Spleen (tissue), 13 donors: ENCODE measurements at regions of chr19 and their contacts with region 1.

Region 1: GRCh38 chr19:41945135-41945766 is 13.9 kb downstream of the RABAC1 start:
- DNase-seq: peak; percentile 93
- H3K4me3 ChIP-seq: peak overlapping the region in 1 of 8 donors; percentile 24
- H3K27ac ChIP-seq: peak overlapping the region; percentile 60 to 88 (median 76)
- H3K4me1 ChIP-seq: peaks cover 14 to 62% (median 43%) of the 10 kb centered on the region in 6 donors
- H3K27me3 ChIP-seq: peaks cover 0 to 15% (median 11%) of the 10 kb centered on the region in 7 donors
- CTCF ChIP-seq: no peak
- POLR2A ChIP-seq: no peak

Region 2: DNA sequence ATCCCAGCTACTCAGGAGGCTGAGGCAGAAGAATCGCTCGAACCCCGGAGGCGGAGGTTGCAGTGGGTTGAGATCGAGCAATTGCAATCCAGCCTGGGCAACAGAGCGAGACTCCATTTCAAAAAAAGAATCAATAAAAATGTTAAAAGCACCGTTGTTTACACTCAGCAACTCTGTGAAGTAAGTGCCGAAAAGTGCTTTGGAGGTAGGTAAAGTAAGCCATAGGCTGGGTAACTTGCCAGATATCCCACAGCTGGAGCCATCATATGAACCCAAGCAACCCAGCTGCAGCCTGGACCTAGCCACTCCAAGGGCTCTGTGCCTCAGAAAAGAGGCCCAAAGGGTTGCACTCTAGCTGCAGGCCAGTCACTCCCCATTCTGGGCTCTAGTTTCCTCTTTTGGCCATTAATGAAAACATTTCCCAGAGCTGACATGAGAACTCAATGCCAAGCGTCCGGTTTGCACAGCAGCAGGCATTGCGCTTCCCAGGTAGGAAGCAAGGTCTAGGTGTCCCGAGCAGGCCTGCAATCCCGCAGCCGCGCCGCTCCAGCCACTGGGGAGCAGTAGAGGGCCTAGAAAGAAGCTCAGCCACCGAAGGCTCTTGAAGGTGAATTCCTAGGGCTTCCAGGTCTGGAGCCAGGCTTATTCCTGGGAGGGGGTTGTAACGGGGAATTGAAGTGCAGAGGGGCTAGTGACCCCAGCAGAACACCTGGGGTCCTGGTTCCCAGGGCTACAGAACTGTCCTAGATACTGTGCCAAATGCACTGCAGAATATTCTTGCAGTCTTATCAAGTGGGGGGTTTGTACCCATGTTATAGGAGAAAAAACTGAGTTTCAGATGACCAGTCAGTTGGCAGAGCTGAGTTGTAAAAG is 72.2 kb before region 1 on chr19:
- intact Hi-C with region 1: loop called (anchors 5 kb)
- DNase-seq: peak; percentile 94
- H3K4me3 ChIP-seq: peak overlapping the region in 1 of 8 donors; percentile 47
- H3K27ac ChIP-seq: peak overlapping the region; percentile 61 to 99 (median 82)
- H3K4me1 ChIP-seq: peaks cover 58 to 100% (median 98%) of the 10 kb centered on the region in 6 donors
- H3K27me3 ChIP-seq: no peaks in the 10 kb centered on the region
- CTCF ChIP-seq: peak; percentile 58 to 86 (median 74)
- POLR2A ChIP-seq: no peak

Region 3: DNA sequence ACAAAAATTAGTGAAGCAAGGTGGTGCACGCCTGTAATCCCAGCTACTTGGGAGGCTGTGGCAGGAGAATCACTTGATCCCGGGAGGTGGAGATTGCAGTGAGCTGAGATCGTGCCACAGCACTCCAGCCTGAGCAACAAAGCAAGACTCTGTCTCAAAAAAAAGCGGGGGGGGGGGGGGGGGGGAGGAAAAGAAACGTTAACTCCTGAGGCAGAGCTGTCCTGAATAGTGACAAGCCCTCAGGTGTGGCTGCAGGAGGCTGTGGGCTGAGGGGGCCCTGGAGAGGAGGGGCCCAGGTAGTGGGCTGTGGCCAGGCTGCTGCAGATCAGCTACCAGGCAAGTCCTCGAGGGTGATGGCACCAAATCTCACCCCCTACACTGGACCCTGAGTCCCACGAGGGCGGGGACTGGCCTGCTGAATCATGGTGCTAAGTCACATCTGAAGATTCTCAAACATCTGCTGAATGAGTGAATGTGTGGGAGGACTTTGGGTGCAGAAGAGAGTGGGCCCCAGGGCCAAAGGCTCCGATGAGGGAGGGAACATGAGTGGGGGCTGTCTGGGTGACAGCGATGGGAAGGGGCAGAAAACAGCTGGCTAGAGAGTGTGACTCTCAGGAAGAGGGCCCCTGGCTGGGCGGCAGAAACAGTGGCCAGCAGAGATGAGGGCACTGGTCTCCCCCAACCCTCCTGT is 73.4 kb after region 1 on chr19:
- intact Hi-C with region 1: no loop called
- DNase-seq: no peak
- H3K4me3 ChIP-seq: no peak overlapping the region
- H3K27ac ChIP-seq: no peak overlapping the region
- H3K4me1 ChIP-seq: no peaks in the 10 kb centered on the region
- H3K27me3 ChIP-seq: no peaks in the 10 kb centered on the region
- CTCF ChIP-seq: no peak
- POLR2A ChIP-seq: no peak

Region 4: DNA sequence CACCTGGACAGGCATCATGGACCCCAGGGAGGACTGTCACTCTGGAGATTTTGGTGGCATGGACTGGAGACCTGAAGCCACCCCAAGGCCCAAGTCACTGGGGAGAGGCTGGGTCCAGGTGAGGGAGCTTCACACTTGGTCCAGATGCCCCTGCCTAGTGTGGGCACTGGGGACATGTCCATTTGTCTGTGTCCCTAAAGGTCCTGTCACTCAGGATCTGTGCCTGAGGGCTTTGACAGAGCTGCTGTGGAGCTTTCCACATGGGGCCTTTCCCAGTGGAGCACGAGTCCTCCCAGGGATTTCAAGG is 689.9 kb after region 1 on chr19:
- intact Hi-C with region 1: no loop called
- DNase-seq: no peak
- H3K4me3 ChIP-seq: no peak overlapping the region
- H3K27ac ChIP-seq: no peak overlapping the region
- H3K4me1 ChIP-seq: no peaks in the 10 kb centered on the region
- H3K27me3 ChIP-seq: peaks cover 0 to 3% (median 0%) of the 10 kb centered on the region in 7 donors
- CTCF ChIP-seq: no peak
- POLR2A ChIP-seq: no peak